Activated CD4-positive, alpha-beta memory T cell treated with anti-CD3 and anti-CD28 coated beads for 36 hours (primary cell): ENCODE measurements at regions of chr1 and their contacts with region 1.

Region 1: DNA sequence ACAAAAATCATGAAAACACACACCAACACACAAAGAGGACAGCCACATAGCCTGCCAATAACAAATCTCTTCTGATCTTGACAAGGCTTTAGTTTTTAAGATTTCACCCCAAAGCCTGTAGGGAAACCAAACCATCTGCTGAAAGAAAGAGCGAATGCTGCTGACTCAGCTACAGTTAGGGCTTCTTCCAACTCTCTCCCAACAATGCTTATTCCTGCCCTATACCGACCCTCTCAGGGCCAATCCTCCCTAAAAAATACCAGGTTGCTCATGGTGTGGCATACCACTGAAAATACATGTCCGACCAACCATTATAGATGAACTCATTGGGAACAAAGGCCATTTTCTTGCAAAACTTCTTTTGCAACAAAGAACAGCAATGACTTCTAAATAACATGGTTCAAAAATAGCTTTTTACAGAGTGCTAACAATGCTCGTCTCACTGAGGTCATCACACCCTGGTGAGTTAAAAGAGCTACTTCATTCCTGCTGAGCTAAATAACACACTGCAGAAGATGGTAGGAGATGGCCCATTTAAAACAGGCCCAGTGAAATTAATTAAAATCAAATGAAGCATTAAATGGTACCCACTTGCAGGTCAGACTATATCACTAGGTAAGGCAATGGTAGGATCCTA is 86.1 kb downstream of the KIAA0319L start:
- DNase-seq: no peak
- H3K4me3 Mint-ChIP-seq: no peak overlapping the region
- H3K27ac Mint-ChIP-seq: no peak overlapping the region
- H3K4me1 Mint-ChIP-seq: peaks cover 8% of the 10 kb centered on the region
- H3K27me3 Mint-ChIP-seq: no peaks in the 10 kb centered on the region

Region 2: DNA sequence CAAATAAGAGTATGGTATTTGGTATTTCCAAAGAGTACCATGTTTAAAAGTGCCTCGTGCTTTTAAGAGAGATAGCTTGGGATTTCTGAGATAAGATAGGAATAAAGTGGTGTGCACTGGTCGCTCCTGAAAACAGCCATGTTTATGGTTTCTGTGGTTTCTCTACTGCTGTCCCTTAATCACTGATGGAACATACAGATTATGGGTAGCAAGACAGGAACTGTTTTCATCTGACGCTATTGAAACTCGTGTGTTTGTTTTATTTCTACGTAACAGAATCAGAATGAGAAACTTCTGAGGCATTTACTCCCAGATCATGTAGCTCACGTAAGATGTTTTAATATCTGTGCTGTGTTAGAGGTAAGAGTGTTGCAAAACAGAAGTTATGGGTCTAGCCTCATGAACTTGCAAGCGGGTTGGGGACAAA is 39.9 kb before region 1 on chr1:
- CTCF ChIA-PET with region 1: no interaction called
- POLR2A ChIA-PET with region 1: no interaction called
- intact Hi-C with region 1: loop called (anchors 1 kb)
- DNase-seq: no peak
- H3K4me3 Mint-ChIP-seq: no peak overlapping the region
- H3K27ac Mint-ChIP-seq: peak overlapping the region; percentile 81
- H3K4me1 Mint-ChIP-seq: peaks cover 29% of the 10 kb centered on the region
- H3K27me3 Mint-ChIP-seq: no peaks in the 10 kb centered on the region

Region 3: DNA sequence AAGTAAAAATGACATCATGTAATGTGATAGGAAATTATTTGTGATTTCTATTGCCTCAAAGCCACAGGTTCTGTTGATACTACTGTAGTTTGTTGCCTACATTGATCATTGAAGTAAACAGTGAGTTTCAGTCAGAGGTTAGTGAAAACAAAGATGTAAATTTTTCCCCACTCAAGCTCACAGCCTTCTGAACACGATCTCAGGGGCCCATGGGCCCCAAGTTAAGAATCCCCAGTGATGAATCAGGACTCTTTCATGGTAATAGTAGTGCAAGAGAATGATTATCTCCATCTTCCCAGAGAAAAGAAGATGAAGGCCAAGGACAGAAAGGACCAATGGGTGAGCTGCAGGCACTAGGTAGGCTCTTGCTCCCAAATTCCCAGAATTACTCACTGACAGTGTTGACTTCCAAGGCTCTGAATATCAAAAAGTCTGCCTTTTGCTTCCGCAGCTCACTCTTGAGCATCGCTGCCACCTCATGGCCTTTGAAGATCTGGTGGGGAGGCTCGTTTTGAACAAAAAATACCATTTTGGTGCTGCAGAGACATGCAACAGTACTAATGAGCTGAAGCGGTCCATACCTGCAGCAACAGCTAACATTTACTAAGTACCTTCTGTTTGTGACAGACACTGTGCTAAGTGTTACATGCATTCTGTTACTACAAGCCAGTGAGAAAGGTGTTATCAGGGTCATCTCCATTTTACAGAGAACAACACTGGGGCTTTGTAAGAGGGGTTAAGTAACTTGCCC is 27.2 kb before region 1 on chr1:
- CTCF ChIA-PET with region 1: no interaction called
- POLR2A ChIA-PET with region 1: no interaction called
- intact Hi-C with region 1: no loop called
- DNase-seq: no peak
- H3K4me3 Mint-ChIP-seq: no peak overlapping the region
- H3K27ac Mint-ChIP-seq: peak overlapping the region; percentile 2
- H3K4me1 Mint-ChIP-seq: peaks cover 16% of the 10 kb centered on the region
- H3K27me3 Mint-ChIP-seq: no peaks in the 10 kb centered on the region